CD8-positive, alpha-beta T cell (primary cell): ENCODE measurements at regions of chr1 and their contacts with region 1.

Region 1: GRCh38 chr1:35726450-35727433 is 8.1 kb upstream of the C1orf216 start:
- DNase-seq: peak in 8 of 9 experiments; percentile 30 to 79 (median 53)
- ATAC-seq: peak; percentile 90
- H3K4me3 ChIP-seq: no peak overlapping the region
- H3K4me3 Mint-ChIP-seq: no peak overlapping the region
- H3K27ac ChIP-seq: no peak overlapping the region
- H3K27ac Mint-ChIP-seq: no peak overlapping the region
- H3K4me1 ChIP-seq: no peaks in the 10 kb centered on the region
- H3K4me1 Mint-ChIP-seq: no peaks in the 10 kb centered on the region
- H3K27me3 ChIP-seq: no peaks in the 10 kb centered on the region
- H3K27me3 Mint-ChIP-seq: no peaks in the 10 kb centered on the region
- CTCF ChIP-seq: peak; percentile 87

Region 2: GRCh38 chr1:35715568-35716002 is 11.2 kb before region 1 on chr1:
- CTCF ChIA-PET with region 1: interaction called, 124 read pairs
- POLR2A ChIA-PET with region 1: no interaction called
- intact Hi-C with region 1: no loop called
- DNase-seq: peak; percentile 57 to 85 (median 79)
- ATAC-seq: peak; percentile 63
- H3K4me3 ChIP-seq: no peak overlapping the region
- H3K4me3 Mint-ChIP-seq: peak overlapping the region; percentile 24
- H3K27ac ChIP-seq: no peak overlapping the region
- H3K27ac Mint-ChIP-seq: no peak overlapping the region
- H3K4me1 ChIP-seq: peaks cover 10% of the 10 kb centered on the region
- H3K4me1 Mint-ChIP-seq: peaks cover 30% of the 10 kb centered on the region
- H3K27me3 ChIP-seq: no peaks in the 10 kb centered on the region
- H3K27me3 Mint-ChIP-seq: no peaks in the 10 kb centered on the region
- CTCF ChIP-seq: peak; percentile 89

Region 3: DNA sequence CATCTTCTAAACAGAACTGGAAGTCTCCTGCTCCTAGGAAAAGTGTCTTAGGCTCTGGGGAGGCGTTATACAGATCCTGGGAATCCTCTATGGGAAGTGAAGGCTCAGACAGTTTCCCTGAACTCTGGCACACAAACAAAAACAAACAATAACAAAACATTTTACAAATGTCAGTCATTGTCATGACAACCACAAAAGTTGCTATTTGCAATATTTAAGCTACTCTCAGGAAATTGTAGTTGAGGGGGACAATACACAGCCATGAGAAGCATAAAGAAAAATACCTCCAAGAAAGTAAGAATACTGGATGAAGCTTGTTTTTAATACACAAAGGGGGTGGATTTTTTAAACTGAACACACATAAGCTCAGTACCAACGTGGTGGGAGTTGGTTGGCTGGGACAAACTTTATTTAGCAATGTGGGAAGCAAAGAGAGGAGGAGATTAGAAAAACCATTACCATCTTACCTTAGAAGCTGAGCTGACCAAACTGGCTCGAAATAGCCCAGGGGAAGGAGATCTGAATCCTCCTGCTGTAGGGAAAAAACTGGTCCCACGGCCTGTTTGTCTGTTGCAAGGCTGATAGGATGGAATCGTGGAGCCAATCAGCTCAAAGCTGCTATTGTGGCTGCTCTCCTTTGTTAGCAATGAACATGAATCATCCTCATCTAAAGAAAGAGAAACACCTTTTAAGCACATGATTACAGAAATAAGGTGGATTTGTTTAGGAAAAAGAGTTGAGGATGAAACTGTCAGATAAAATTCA is 21.4 kb after region 1 on chr1:
- CTCF ChIA-PET with region 1: interaction called, 61 read pairs
- POLR2A ChIA-PET with region 1: no interaction called
- intact Hi-C with region 1: no loop called
- DNase-seq: no peak
- ATAC-seq: no peak
- H3K4me3 ChIP-seq: no peak overlapping the region
- H3K4me3 Mint-ChIP-seq: no peak overlapping the region
- H3K27ac ChIP-seq: no peak overlapping the region
- H3K27ac Mint-ChIP-seq: no peak overlapping the region
- H3K4me1 ChIP-seq: no peaks in the 10 kb centered on the region
- H3K4me1 Mint-ChIP-seq: no peaks in the 10 kb centered on the region
- H3K27me3 ChIP-seq: no peaks in the 10 kb centered on the region
- H3K27me3 Mint-ChIP-seq: no peaks in the 10 kb centered on the region
- CTCF ChIP-seq: no peak

Region 4: GRCh38 chr1:35769759-35770446 is 43.2 kb after region 1 on chr1 and contains the start of gene CLSPN:
- CTCF ChIA-PET with region 1: interaction called, 18 read pairs
- POLR2A ChIA-PET with region 1: no interaction called
- intact Hi-C with region 1: loop called (anchors 1 kb)
- DNase-seq: peak; percentile 86 to 96 (median 93)
- ATAC-seq: peak; percentile 94
- H3K4me3 ChIP-seq: peak within 1 kb of the TSS; percentile 90 to 97
- H3K4me3 Mint-ChIP-seq: peak within 1 kb of the TSS; percentile 99
- H3K27ac ChIP-seq: peak within 1 kb of the TSS; percentile 61 to 81
- H3K27ac Mint-ChIP-seq: peak within 1 kb of the TSS; percentile 92
- H3K4me1 ChIP-seq: peaks cover 5% of the 10 kb centered on the region
- H3K4me1 Mint-ChIP-seq: peaks cover 8% of the 10 kb centered on the region
- H3K27me3 ChIP-seq: no peaks in the 10 kb centered on the region
- H3K27me3 Mint-ChIP-seq: no peaks in the 10 kb centered on the region
- CTCF ChIP-seq: no peak
- total RNA-seq, gene CLSPN: 0.41 to 0.81 TPM

Region 5: GRCh38 chr1:35857830-35858229 is 131.1 kb after region 1 on chr1:
- CTCF ChIA-PET with region 1: no interaction called
- POLR2A ChIA-PET with region 1: no interaction called
- intact Hi-C with region 1: no loop called
- DNase-seq: no peak
- ATAC-seq: no peak
- H3K4me3 ChIP-seq: no peak overlapping the region
- H3K4me3 Mint-ChIP-seq: no peak overlapping the region
- H3K27ac ChIP-seq: no peak overlapping the region
- H3K27ac Mint-ChIP-seq: no peak overlapping the region
- H3K4me1 ChIP-seq: no peaks in the 10 kb centered on the region
- H3K4me1 Mint-ChIP-seq: no peaks in the 10 kb centered on the region
- H3K27me3 ChIP-seq: no peaks in the 10 kb centered on the region
- H3K27me3 Mint-ChIP-seq: no peaks in the 10 kb centered on the region
- CTCF ChIP-seq: no peak

Region 6: GRCh38 chr1:36796106-36796590 is 1069.4 kb after region 1 on chr1:
- CTCF ChIA-PET with region 1: no interaction called
- POLR2A ChIA-PET with region 1: no interaction called
- intact Hi-C with region 1: no loop called
- DNase-seq: no peak
- ATAC-seq: no peak
- H3K4me3 ChIP-seq: no peak overlapping the region
- H3K4me3 Mint-ChIP-seq: no peak overlapping the region
- H3K27ac ChIP-seq: no peak overlapping the region
- H3K27ac Mint-ChIP-seq: no peak overlapping the region
- H3K4me1 ChIP-seq: no peaks in the 10 kb centered on the region
- H3K4me1 Mint-ChIP-seq: no peaks in the 10 kb centered on the region
- H3K27me3 ChIP-seq: no peaks in the 10 kb centered on the region
- H3K27me3 Mint-ChIP-seq: peaks cover 3% of the 10 kb centered on the region
- CTCF ChIP-seq: no peak